ENCODE measurements at regions of chr11 and their contacts with region 1.

Region 1: GRCh38 chr11:47213985-47214564 is 699 bp upstream of the DDB2 start:
- DNase-seq: peak; percentile 92
- ATAC-seq: peak; percentile 91 to 96 (median 94)
- H3K4me3 ChIP-seq: peak overlapping the region; percentile 49 to 85 (median 66)
- H3K27ac ChIP-seq: peak overlapping the region; percentile 76 to 97 (median 90)
- H3K4me1 ChIP-seq: peaks cover 11 to 47% (median 21%) of the 10 kb centered on the region in 9 donors
- H3K27me3 ChIP-seq: no peaks in the 10 kb centered on the region
- CTCF ChIP-seq: peak in 1 of 9 donors; percentile 6

Region 2: GRCh38 chr11:47259178-47259977 is 45.3 kb after region 1 on chr11:
- intact Hi-C with region 1: loop called in 1 of 10 experiments (anchors 5 kb)
- DNase-seq: peak in 1 of 2 donors; percentile 45
- ATAC-seq: peak in 6 of 8 donors; percentile 24 to 51 (median 40)
- H3K4me3 ChIP-seq: peak overlapping the region in 6 of 10 donors; percentile 11 to 53 (median 49)
- H3K27ac ChIP-seq: peak overlapping the region in 7 of 10 donors; percentile 19 to 88 (median 83)
- H3K4me1 ChIP-seq: peaks cover 24 to 63% (median 55%) of the 10 kb centered on the region in 9 donors
- H3K27me3 ChIP-seq: no peaks in the 10 kb centered on the region
- CTCF ChIP-seq: peak; percentile 62 to 78 (median 73)

Region 3: DNA sequence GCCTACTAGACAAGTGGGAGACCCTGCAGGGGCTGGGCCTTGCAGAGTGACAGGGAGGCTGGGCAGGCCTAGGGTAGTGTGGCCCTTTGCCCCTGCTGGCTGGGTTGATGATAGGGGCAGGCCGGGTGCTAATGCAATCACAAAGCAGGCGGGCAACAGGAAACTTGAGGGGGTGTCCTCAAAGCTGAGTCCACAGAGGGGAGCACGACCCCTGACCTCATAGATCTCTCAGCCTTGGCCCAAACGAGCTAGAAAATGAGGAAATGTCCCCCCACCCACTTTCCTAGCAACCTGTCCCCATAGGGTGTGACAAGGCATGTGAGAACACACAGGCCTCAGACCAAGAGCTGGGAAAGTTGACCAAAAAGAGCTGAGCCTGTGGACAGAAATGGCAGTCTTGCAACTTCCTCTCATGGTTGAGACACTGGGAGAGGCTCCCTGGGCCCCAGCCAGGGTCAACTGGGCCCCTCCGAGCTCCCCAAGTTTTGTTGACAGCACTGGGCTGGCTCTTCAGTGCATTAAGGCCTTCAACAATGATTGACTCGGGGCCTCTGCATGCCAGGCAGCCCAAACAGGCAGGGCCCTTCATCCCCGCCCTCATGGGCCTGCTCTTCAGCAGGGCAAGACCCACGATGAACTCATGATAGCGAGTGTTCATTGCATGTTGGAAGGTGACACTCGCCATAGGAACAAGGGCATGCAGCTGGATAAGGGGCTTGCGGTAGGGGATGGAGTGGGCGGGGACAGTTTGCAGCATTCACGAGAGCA is 174.0 kb after region 1 on chr11:
- intact Hi-C with region 1: no loop called
- DNase-seq: no peak
- ATAC-seq: peak in 3 of 8 donors; percentile 18 to 38 (median 34)
- H3K4me3 ChIP-seq: peak overlapping the region in 1 of 10 donors; percentile 31
- H3K27ac ChIP-seq: peak overlapping the region in 3 of 10 donors; percentile 31 to 100 (median 60)
- H3K4me1 ChIP-seq: peaks cover 0 to 60% (median 0%) of the 10 kb centered on the region in 9 donors
- H3K27me3 ChIP-seq: no peaks in the 10 kb centered on the region
- CTCF ChIP-seq: no peak

Measured in heart right ventricle (tissue), 16 donors.